AG04449 (cell line): ENCODE measurements at regions of chr22 and their contacts with region 1.

Region 1: GRCh38 chr22:22848364-22848866 is 39.2 kb upstream of the IGLL5 start:
- DNase-seq: no peak
- H3K4me3 ChIP-seq: no peak overlapping the region
- CTCF ChIP-seq: peak; percentile 88

Region 2: DNA sequence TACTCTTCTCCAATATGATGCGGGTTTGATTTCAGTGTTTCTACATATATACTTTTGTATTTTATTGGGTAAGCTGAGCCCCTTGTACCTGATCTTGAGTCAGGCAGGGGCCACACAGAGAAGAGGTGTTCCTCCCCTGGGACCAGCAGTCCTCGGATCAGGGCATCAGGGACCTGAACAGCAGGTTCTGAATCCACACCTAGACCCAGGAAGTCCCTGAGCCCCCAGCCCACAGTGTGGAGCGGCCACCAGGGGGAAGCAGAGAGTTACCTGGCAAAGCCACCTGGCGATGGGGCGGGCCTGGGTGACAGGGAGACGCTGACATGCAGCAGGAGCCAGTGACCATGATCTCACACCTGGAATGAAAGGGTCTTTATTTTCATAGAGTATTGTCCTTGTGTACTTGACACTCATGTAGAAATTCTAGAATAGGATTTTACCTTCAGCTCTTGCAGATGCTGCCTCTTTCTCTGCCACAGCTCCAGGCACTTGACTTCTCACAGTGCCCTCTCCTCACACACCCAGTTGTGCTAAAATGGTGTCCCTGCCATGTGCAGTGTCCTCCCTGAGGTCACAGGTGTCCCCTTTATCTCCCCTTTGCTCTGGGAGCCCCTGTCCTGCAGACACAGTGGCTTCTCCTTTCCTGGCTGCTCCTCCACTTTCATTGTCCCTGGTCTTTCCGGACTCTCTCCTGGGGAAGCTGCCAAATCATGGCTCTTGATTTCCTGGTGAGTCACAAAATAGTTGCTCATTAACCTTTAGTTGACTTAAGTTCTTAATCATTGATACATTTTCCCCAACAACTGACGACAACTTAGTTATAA is 155.5 kb before region 1 on chr22:
- CTCF ChIA-PET with region 1: no interaction called
- POLR2A ChIA-PET with region 1: no interaction called
- DNase-seq: no peak
- H3K4me3 ChIP-seq: no peak overlapping the region
- CTCF ChIP-seq: peak; percentile 50

Region 3: DNA sequence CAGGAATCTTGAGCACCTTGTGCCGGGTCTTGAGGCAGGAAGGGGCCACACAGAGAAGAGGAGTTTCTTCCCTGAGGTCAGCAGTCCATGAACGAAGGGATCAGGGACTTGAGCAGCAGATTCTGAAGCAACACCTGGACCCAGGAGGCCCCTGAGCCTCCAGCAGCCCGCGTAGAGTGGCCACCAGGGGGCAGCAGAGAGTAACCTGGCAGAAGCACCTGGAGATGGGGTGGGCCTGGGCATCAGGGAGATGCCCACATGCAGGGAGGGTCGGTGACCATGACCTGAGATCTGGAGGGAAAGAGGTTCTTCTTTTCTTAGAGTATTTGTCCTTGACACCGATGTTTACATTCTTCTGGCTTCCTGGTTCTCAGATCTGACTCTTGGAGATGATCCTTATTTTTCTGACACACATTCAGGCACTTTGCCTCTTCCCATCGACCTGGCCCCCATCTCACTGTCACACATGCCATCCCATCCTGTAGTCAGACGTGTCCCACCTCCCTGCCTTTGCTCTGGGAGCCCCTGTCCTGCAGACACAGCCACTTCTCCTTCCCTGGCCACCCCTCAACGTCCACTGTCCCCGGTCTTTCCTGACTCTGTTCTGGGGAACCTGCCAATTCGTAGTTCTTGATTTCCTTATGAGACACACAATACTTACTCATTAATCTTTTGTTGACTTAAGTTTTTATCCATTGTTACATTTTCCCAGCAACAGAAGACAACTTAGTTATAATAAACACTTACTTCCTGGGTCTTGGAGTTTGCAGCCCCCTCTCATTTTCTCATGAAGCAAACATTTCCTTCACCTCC is 137.5 kb before region 1 on chr22:
- CTCF ChIA-PET with region 1: no interaction called
- POLR2A ChIA-PET with region 1: no interaction called
- DNase-seq: no peak
- H3K4me3 ChIP-seq: no peak overlapping the region
- CTCF ChIP-seq: peak; percentile 85

Region 4: DNA sequence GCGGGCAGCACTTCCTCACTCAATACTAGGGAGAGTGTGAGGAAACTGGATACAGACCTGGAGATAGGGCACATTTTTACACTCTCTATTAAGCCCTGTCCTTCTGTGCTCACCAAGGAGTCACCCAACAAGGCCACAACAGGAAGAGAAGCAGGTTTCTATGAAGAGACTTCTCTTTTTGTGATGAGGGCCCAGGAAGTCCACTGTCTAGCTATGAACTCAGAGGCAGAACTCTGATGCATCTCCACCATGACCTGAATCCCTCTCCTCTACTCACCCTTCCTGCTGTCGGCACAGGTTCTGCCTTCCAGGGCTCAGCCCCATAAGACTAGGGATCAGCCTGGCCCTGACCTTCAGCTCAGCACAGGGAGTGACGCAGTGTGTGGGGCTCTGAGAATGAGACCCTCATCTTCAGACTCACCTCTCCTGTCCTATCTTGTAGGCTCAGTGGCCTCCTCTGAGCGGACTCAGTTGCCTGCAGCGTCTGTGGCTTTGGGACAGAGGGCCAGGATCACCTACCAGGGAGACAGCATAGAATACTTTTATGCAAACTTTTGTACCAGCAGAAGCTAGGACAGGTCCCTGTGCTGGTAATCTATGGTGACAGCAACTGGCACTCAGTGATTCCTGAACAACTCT is 10.1 kb before region 1 on chr22:
- CTCF ChIA-PET with region 1: interaction called, 14 read pairs
- POLR2A ChIA-PET with region 1: no interaction called
- DNase-seq: no peak
- H3K4me3 ChIP-seq: no peak overlapping the region
- CTCF ChIP-seq: no peak

Region 5: GRCh38 chr22:22893077-22893805 is 44.8 kb after region 1 on chr22:
- CTCF ChIA-PET with region 1: no interaction called
- POLR2A ChIA-PET with region 1: no interaction called
- DNase-seq: no peak
- H3K4me3 ChIP-seq: no peak overlapping the region
- CTCF ChIP-seq: no peak